AG04449 (cell line): ENCODE measurements at regions of chr4 and their contacts with region 1.

Region 1: DNA sequence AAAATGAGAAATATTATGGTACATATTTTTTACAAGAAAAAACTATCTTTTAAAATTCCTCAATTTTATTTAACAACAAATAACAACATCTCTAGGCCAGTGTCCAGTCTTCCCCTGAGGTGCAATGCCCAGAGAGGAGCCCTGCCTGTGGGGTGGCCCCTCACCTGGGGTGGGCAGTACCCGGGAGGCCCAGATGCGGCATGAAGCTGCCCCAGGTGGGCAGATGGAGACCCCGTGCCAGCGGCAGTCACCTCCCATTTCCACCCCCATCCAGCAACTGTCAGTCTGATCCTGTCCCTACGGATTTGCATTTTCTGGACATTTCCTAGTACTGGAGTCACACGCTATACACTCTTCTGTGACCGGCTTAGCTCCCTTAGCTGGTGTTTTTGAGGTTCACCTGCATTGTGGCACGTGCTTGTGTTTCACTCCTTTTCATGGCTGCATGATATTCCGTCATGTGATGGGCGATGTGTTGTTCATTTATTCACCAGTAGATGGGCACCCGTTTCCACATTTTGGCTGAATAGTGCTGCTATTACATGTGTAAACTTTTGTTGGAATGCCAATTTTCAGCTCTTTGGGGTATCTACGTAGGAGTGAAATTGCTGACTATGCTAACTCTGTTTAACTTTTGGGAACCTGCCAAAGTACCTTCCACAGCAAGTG is 11.9 kb upstream of the MAEA start:
- DNase-seq: no peak
- H3K4me3 ChIP-seq: no peak overlapping the region
- CTCF ChIP-seq: no peak

Region 2: GRCh38 chr4:1266881-1267763 is 10.7 kb before region 1 on chr4:
- CTCF ChIA-PET with region 1: interaction called, 10 read pairs
- POLR2A ChIA-PET with region 1: no interaction called
- DNase-seq: no peak
- H3K4me3 ChIP-seq: no peak overlapping the region
- CTCF ChIP-seq: no peak